ENCODE measurements at regions of chr10 and their contacts with region 1.

Region 1: DNA sequence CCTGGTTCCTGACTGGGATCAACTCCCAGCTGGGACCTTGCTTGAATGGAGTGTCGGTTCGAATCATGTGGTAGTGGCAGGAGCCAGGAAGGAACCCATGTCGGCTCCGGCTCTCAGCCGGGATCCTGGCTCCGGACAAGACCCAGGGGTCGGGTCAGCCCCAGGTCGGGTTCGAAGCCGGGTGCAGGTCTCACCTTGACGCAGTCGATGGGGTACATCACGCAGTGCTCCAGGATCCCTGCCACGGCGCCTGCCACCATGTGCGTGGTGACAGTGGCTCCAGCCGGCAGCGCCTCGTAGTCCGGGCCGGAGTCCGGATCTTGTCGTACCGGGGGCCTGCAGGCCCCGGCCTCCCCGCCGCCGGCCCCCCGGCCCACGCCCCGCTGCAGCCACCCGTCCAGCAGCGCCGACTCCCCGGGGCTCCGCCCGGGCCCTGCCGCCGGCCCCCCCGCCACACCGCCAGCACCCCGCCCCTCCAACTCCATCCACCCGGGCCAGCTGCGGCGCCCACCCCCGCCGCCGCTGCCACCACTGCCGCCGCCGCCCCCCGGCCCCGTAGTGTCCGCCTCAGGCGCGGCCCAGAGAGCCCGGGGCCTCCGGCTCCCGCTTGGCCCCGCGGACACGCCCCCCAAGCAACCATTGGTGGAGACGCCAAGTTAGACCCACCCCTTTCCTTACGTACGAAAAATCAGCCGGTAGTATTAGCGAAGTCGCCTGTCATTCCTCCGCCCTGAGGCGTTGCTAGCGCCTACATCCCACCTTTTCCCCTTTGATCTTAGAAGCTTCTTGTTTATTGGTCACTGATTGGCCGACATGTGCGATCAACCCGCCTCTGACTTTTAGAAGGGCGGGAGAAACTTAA is at the start of gene SLC25A28:
- DNase-seq: no peak
- CTCF ChIP-seq: no peak

Region 2: DNA sequence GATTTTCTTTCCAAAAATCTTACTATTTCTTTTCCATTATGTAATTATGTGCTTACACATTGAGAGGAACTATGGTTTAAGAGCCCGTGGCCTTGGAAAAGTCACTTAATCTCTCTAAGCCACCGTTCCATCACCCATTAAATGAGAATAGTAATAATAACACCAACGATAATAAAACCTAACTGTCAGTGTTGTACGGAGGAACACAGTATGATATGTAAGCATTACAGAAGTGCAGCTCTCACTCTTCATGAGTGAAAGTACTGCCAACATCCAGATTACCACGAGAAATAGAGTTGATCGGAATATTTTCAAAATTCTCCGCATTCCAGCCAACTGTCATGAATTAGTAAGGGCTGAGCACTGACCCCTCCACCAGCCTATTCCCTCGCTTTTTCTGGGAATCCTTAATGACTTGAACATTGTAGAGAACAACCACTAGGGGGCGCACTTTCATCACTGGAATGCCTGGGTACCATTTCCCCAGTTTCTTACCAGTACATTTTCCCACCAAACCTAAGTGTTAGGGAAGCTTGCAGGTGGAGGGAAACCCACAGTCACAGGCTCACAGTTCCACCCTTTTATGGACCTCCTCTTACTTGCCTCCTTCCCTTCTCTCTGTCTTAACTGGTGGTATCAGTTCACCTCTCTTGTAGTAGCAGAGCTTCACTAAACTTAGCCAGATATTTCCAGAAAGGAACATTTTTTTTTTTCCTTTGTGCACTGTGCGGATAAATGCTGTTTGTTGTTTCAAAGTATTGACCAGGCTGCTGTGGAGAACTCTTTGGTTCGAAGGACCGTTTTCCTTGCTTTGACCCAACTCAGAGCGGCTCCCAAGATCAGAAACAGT is 59.6 kb before region 1 on chr10:
- in situ Hi-C with region 1: loop called (anchors 10 kb)
- DNase-seq: no peak
- CTCF ChIP-seq: peak; percentile 71

Measured in GM13977 (cell line).